CD8-positive, alpha-beta T cell (primary cell): ENCODE measurements at regions of chr10 and their contacts with region 1.

Region 1: DNA sequence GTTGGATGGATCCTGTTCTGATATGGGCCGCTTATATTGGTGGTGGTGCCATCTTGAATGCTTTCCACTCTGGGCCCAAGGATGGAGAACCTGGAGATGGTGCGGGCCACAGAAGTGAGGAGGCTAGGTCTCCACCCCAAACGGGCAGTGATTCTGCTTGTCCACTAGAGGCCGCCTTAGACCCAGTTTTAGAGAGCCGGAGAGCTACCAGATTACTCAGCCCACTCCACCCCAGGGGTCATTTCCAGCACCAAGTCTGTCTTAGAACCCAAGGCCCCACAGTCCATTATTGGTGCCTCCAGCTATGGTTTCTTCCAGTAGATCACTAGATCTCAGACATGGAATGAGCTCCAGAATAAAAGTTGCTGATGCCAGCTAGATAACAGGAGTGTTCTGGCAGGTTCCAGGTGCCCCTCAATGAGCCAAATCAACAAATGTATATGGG is 11.8 kb upstream of the CAMK2G start:
- DNase-seq: peak; percentile 34 to 82 (median 66)
- ATAC-seq: peak; percentile 99
- H3K4me3 ChIP-seq: no peak overlapping the region
- H3K4me3 Mint-ChIP-seq: no peak overlapping the region
- H3K27ac ChIP-seq: no peak overlapping the region
- H3K27ac Mint-ChIP-seq: no peak overlapping the region
- H3K4me1 ChIP-seq: no peaks in the 10 kb centered on the region
- H3K4me1 Mint-ChIP-seq: no peaks in the 10 kb centered on the region
- H3K27me3 ChIP-seq: no peaks in the 10 kb centered on the region
- H3K27me3 Mint-ChIP-seq: no peaks in the 10 kb centered on the region
- CTCF ChIP-seq: peak; percentile 78

Region 2: DNA sequence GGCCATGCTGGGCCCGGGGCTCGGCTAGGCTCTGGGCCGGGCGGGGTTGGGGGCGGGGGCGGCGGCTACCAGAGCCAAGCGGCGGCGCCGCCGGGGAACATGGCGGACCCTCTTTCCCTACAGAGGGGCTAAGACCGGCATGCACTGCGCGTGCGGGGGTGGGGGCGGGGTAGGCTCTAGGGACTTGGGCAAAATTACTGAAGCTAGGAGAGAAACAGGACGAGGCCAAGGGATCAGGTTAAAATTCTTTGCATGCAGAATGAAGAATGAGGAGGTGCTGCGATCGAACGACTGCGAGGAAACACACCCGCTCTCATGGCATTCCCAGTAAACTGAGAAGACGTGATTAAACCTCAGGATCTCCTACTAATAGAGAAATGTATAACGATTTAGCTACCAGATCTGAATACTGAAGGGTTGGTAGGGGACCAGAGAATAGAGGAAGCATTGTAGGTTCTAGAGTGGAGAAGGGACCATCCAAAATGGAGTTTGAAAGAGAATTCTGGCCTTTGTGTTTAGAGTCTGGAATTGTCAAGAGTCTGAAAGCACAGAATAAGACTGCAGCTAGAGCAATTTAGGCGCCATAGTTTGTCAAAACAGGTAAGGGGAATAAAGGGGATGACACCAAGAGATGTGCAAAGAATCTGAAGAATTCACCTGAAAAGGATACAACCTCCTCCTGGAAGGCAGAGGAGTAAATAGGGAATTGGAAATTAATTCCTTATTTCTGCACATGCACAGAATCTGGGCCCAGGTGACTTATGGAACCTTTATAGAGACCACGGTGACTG is 390.0 kb before region 1 on chr10 and contains the start of gene PPP3CB:
- CTCF ChIA-PET with region 1: no interaction called
- POLR2A ChIA-PET with region 1: no interaction called
- intact Hi-C with region 1: no loop called
- DNase-seq: peak; percentile 83 to 97 (median 89)
- ATAC-seq: peak; percentile 85
- H3K4me3 ChIP-seq: peak within 1 kb of the TSS; percentile 91 to 94
- H3K4me3 Mint-ChIP-seq: peak within 1 kb of the TSS; percentile 81
- H3K27ac ChIP-seq: peak within 1 kb of the TSS; percentile 87 to 93
- H3K27ac Mint-ChIP-seq: peak within 1 kb of the TSS; percentile 95
- H3K4me1 ChIP-seq: peaks cover 33% of the 10 kb centered on the region
- H3K4me1 Mint-ChIP-seq: peaks cover 49% of the 10 kb centered on the region
- H3K27me3 ChIP-seq: no peaks in the 10 kb centered on the region
- H3K27me3 Mint-ChIP-seq: no peaks in the 10 kb centered on the region
- CTCF ChIP-seq: no peak
- total RNA-seq, gene PPP3CB: 15.8 to 17.0 TPM

Region 3: DNA sequence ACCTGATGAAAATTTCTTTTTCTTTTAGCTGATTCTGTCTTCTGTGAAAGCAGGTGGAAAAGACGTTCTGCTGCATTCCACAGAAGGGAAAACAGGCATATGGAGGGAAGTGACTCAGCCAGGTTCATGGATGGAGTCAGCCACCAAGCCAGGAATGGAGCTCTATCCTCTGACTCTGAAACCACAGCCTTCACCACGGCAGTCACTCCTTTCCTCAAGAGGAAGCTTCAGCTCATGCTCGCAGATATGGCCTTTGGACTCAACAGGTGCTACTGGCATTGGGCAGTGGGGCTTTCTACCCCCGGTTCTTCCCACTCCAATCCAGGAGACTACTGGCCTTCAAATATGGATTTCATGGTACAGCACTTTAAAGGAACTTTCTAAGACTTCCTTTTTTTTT is 13.3 kb after region 1 on chr10:
- CTCF ChIA-PET with region 1: interaction called, 27 read pairs
- POLR2A ChIA-PET with region 1: no interaction called
- intact Hi-C with region 1: no loop called
- DNase-seq: no peak
- ATAC-seq: no peak
- H3K4me3 ChIP-seq: no peak overlapping the region
- H3K4me3 Mint-ChIP-seq: no peak overlapping the region
- H3K27ac ChIP-seq: no peak overlapping the region
- H3K27ac Mint-ChIP-seq: no peak overlapping the region
- H3K4me1 ChIP-seq: no peaks in the 10 kb centered on the region
- H3K4me1 Mint-ChIP-seq: no peaks in the 10 kb centered on the region
- H3K27me3 ChIP-seq: no peaks in the 10 kb centered on the region
- H3K27me3 Mint-ChIP-seq: peaks cover 25% of the 10 kb centered on the region
- CTCF ChIP-seq: no peak

Region 4: GRCh38 chr10:73956476-73957359 is 70.6 kb after region 1 on chr10:
- CTCF ChIA-PET with region 1: interaction called, 10 read pairs
- POLR2A ChIA-PET with region 1: interaction called, 4 read pairs
- intact Hi-C with region 1: loop called in 1 of 2 experiments (anchors 5 kb)
- DNase-seq: peak in 6 of 9 experiments; percentile 12 to 77 (median 36)
- ATAC-seq: peak; percentile 80
- H3K4me3 ChIP-seq: peak overlapping the region; percentile 3 to 26
- H3K4me3 Mint-ChIP-seq: peak overlapping the region; percentile 64
- H3K27ac ChIP-seq: peak overlapping the region in 1 of 2 experiments; percentile 72
- H3K27ac Mint-ChIP-seq: peak overlapping the region; percentile 86
- H3K4me1 ChIP-seq: peaks cover 27% of the 10 kb centered on the region
- H3K4me1 Mint-ChIP-seq: peaks cover 43% of the 10 kb centered on the region
- H3K27me3 ChIP-seq: no peaks in the 10 kb centered on the region
- H3K27me3 Mint-ChIP-seq: no peaks in the 10 kb centered on the region
- CTCF ChIP-seq: no peak

Region 5: DNA sequence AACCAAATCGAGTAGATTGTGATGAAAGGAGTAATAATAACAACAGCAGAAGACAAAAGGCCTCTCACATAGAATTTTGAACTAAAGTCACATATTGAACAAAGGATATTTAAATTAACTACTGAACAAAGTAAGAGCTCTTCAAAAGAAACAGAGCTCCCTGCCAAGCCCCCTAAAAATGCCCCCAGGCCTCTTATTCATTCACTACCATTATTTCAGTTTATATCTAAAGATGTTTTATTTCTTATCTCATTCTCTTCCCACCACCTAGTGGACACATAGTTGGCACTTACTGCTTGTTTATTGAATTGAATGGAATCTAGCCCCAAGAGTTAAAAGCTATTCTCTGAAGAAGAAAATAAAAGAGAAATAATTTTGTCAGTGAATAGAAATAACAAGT is 149.2 kb after region 1 on chr10:
- CTCF ChIA-PET with region 1: interaction called, 17 read pairs
- POLR2A ChIA-PET with region 1: interaction called, 3 read pairs
- intact Hi-C with region 1: loop called (anchors 1 kb)
- DNase-seq: peak in 2 of 9 experiments; percentile 27 to 48
- ATAC-seq: no peak
- H3K4me3 ChIP-seq: no peak overlapping the region
- H3K4me3 Mint-ChIP-seq: no peak overlapping the region
- H3K27ac ChIP-seq: peak overlapping the region in 1 of 2 experiments; percentile 36
- H3K27ac Mint-ChIP-seq: peak overlapping the region; percentile 34
- H3K4me1 ChIP-seq: no peaks in the 10 kb centered on the region
- H3K4me1 Mint-ChIP-seq: peaks cover 22% of the 10 kb centered on the region
- H3K27me3 ChIP-seq: no peaks in the 10 kb centered on the region
- H3K27me3 Mint-ChIP-seq: no peaks in the 10 kb centered on the region
- CTCF ChIP-seq: peak; percentile 15

Region 6: DNA sequence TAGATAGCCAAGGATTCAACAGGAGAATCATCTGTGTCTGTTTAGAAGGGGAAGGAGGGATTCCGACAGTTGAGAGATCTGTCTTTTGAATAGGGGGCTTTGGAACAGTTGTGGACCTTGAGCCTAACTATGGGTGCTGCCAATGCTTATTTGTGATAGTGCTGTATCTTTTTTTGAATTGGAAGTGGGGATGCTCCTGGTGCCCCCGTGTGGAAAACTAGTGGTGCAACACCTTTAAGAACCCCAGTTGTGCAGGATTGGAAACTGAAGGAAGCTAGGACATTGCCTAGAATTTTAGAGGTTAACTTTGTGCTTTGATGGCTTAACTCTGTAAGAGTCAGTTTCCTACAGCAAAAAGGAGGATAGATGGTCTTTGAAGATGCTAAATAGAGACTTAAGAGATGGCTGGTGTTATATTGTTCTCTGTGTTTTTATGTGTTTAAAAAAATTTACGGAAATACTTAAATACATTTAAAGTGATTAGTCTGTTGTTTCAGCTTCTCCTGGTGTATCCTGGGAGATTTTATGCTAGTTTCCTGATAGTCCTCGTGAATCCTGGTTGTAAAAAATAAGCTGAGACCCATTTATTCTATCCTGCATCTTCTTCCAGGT is 195.2 kb after region 1 on chr10:
- CTCF ChIA-PET with region 1: interaction called, 69 read pairs
- POLR2A ChIA-PET with region 1: no interaction called
- intact Hi-C with region 1: loop called (anchors 1 kb)
- DNase-seq: peak; percentile 7 to 67 (median 36)
- ATAC-seq: peak; percentile 62
- H3K4me3 ChIP-seq: no peak overlapping the region
- H3K4me3 Mint-ChIP-seq: no peak overlapping the region
- H3K27ac ChIP-seq: no peak overlapping the region
- H3K27ac Mint-ChIP-seq: no peak overlapping the region
- H3K4me1 ChIP-seq: peaks cover 4% of the 10 kb centered on the region
- H3K4me1 Mint-ChIP-seq: peaks cover 17% of the 10 kb centered on the region
- H3K27me3 ChIP-seq: no peaks in the 10 kb centered on the region
- H3K27me3 Mint-ChIP-seq: no peaks in the 10 kb centered on the region
- CTCF ChIP-seq: peak; percentile 66